SK-N-SH (cell line): ENCODE measurements at regions of chr17 and their contacts with region 1.

Region 1: DNA sequence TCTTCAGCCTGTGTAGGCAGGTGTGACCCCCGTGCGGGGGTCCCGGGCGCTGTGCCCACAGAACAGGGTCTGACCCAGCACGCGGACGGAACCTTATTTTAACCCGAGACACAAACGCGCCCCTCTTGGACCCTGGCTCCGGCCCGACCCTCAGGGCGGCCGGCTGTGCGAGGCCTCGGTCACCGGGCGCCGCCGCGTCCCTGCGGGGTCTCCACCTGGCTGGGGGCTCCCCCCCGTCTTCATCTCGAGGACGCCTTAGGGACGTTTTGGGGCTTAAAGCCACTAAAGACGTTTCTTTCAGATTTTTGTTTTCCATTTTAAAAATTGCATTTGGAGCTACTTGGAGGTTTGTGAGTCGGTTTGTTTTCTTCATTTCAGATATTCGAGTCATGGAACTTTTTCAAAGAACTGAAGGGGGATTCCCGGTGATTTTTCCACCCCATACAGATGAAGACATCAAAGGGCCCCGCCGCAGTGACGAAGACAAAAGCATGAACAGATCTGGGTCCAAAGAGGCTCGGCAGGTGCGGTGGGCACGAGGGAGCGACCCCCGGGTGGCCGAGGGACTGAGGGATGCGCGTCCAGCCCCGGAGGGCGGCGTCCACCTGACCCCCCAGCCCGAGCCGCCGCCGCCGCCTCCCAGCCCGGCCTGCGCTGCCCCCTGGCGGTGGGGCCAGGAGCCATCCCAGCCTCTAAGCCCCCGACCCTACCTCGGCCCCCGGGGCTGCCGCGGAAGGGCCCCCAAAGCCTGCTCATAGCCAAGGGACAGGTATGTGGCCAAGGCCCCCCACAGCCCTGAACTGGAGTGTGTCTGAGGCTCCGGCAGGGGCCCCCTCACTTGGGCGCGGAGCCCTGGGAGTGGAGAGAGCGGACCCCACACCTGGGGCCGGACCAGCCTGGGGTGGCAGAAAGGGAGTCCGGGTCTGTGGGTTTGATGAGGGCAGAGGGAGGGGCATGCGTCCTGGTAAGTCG is 3.8 kb upstream of the CD7 start:
- DNase-seq: peak; percentile 95
- H3K4me3 ChIP-seq: peak overlapping the region; percentile 32 to 52
- H3K27ac ChIP-seq: no peak overlapping the region
- H3K4me1 ChIP-seq: peaks cover 5 to 14% of the 10 kb centered on the region in 2 experiments; a peak in 3 of 4 replicates
- H3K27me3 ChIP-seq: peaks cover 17% of the 10 kb centered on the region; the same call in 1 of the 2 replicates
- CTCF ChIP-seq: peak; percentile 99
- EP300 ChIP-seq: no peak
- RAD21 ChIP-seq: peak; percentile 70

Region 2: DNA sequence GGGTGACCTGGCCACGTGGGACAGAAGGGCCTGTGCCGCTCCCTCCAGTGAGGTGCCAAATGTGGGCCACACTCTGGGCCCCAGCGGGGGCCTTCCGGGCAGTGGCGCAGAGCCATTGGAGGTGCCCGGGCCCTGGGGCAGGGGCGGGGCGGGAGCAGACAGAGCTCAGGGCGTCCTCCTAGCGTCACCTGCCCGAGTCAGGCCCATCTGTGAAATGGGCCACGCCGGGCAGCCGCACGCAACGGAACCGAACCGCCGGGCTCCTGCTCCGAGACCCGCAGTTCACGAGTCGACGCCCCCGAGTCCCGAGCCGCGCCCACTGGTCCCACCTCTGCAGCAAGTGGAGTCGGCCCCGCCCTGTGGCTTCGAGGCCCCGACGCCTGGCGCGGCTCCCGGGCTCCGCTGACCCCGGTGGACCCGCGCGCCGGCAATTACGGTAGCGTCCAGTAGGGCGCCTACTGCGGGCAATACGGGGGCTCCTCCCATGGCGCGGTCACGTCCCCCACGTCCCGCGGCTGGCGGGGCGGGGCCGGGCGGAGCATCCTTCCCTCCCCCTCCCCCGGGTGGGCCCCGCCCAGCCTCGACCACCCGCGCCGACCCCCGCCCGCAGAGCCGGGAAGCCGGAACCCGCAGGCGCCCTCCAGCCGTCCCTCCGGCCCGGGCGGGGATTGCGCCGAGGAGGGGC is 90.5 kb before region 1 on chr17:
- CTCF ChIA-PET with region 1: interaction called, 112 read pairs
- POLR2A ChIA-PET with region 1: no interaction called
- DNase-seq: peak; percentile 77
- H3K4me3 ChIP-seq: peak overlapping the region in 1 of 2 experiments; percentile 62; a peak in 2 of 4 replicates
- H3K27ac ChIP-seq: no peak overlapping the region
- H3K4me1 ChIP-seq: peaks cover 5 to 6% of the 10 kb centered on the region in 2 experiments; a peak in 2 of 4 replicates
- H3K27me3 ChIP-seq: no peaks in the 10 kb centered on the region
- CTCF ChIP-seq: no peak
- EP300 ChIP-seq: no peak
- RAD21 ChIP-seq: no peak

Region 3: GRCh38 chr17:82267575-82268379 is 53.5 kb before region 1 on chr17:
- CTCF ChIA-PET with region 1: interaction called, 17 read pairs
- POLR2A ChIA-PET with region 1: no interaction called
- DNase-seq: peak; percentile 66
- H3K4me3 ChIP-seq: peak overlapping the region; percentile 2 to 18
- H3K27ac ChIP-seq: peak overlapping the region; percentile 50 to 92
- H3K4me1 ChIP-seq: peaks cover 47 to 49% of the 10 kb centered on the region in 2 experiments; a peak in 3 of 4 replicates
- H3K27me3 ChIP-seq: no peaks in the 10 kb centered on the region
- CTCF ChIP-seq: peak; percentile 13; the same call in 1 of the 2 replicates
- EP300 ChIP-seq: no peak
- RAD21 ChIP-seq: no peak

Region 4: DNA sequence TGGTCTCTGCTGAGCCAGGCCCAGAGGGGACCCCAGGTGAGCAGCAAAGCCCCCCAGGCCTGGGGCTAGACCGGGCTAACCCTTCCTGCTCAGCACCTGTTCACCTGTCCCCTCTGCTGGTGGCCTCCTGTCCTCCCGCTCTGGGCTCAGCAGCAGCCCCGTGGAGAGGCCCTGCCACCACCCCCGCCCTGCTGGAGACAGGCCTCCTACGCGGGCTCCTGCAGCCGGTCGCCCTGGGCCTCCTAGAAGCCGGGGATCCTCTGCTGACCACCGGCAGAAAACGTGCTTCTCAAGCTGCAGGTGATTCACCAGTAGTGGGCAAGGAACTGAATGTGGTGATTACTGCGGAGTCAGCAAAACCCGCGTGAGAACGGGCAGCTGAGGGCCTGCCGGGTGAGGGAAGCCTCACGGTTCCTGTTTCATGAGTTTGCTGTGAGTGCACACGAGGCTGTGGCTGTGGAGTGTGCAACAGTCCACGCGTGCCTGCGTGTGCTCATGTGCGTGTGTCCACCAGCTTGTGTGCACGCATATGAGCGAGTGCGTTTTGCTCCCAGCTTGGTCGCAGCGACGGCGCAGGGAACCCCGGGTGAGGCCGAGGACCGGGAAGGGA is 11.5 kb after region 1 on chr17:
- CTCF ChIA-PET with region 1: interaction called, 54 read pairs
- POLR2A ChIA-PET with region 1: interaction called, 3 read pairs
- DNase-seq: peak; percentile 78
- H3K4me3 ChIP-seq: peak overlapping the region; percentile 13 to 31; a peak in 2 of 4 replicates
- H3K27ac ChIP-seq: no peak overlapping the region
- H3K4me1 ChIP-seq: peaks cover 18 to 45% of the 10 kb centered on the region in 2 experiments; a peak in 3 of 4 replicates
- H3K27me3 ChIP-seq: no peaks in the 10 kb centered on the region; the same call in none of the 2 replicates
- CTCF ChIP-seq: no peak
- EP300 ChIP-seq: no peak
- RAD21 ChIP-seq: no peak

Region 5: GRCh38 chr17:82400830-82401229 is 79.6 kb after region 1 on chr17:
- CTCF ChIA-PET with region 1: no interaction called
- POLR2A ChIA-PET with region 1: no interaction called
- DNase-seq: no peak
- H3K4me3 ChIP-seq: no peak overlapping the region
- H3K27ac ChIP-seq: no peak overlapping the region
- H3K4me1 ChIP-seq: peaks cover 9 to 35% of the 10 kb centered on the region in 2 experiments; a peak in 3 of 4 replicates
- H3K27me3 ChIP-seq: no peaks in the 10 kb centered on the region
- CTCF ChIP-seq: no peak
- EP300 ChIP-seq: no peak
- RAD21 ChIP-seq: no peak